Natural killer cell (primary cell): ENCODE measurements at regions of chr11 and their contacts with region 1.

Region 1: DNA sequence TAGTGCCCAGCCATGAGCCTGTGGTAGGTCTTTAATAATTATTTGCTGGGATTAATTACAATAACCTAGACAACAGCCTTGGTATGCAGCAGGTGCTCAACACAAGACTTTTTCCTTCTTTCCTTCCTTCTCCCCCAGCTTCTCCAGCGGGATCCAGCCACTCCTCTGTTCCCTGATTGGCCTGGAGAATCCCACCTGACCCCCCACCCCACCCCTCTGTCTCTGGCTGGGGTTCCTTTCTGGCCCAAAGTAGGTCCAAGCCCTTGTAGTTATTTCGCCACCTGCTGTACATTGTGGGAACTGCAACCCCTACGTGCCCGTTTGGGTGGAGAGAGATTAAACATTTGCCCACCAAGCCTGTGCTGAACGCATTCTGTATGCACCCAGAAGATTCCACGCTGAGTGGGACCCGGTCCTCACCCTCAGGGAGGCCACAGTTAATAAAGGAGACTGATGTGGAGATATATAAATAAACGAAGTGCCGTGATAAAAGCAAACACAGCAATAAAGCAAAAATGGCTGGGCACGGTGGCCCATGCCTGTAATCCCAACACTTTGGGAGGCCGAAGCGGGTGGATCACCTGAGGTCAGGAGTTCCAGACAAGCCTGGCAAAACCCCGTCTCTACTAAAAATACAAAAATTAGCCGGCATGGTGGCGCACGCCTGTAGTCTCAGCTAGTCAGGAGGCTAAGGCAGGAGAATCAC is 32.1 kb upstream of the DGKZ start:
- DNase-seq: peak; percentile 63 to 86
- ATAC-seq: peak; percentile 86 to 96 (median 95)
- H3K4me3 ChIP-seq: no peak overlapping the region
- H3K4me3 Mint-ChIP-seq: no peak overlapping the region
- H3K27ac ChIP-seq: no peak overlapping the region
- H3K27ac Mint-ChIP-seq: no peak overlapping the region
- H3K4me1 ChIP-seq: peaks cover 15% of the 10 kb centered on the region
- H3K4me1 Mint-ChIP-seq: peaks cover 15 to 18% of the 10 kb centered on the region in 2 donors
- H3K27me3 ChIP-seq: no peaks in the 10 kb centered on the region
- H3K27me3 Mint-ChIP-seq: peaks cover 0 to 6% of the 10 kb centered on the region in 2 donors
- CTCF ChIP-seq: peak; percentile 96

Region 2: GRCh38 chr11:46127150-46127638 is 188.0 kb before region 1 on chr11:
- intact Hi-C with region 1: loop called (anchors 5 kb)
- DNase-seq: peak; percentile 45 to 83
- ATAC-seq: peak; percentile 99 to 100 (median 99)
- H3K4me3 ChIP-seq: no peak overlapping the region
- H3K4me3 Mint-ChIP-seq: peak overlapping the region; percentile 21
- H3K27ac ChIP-seq: peak overlapping the region; percentile 56
- H3K27ac Mint-ChIP-seq: peak overlapping the region; percentile 87 to 88
- H3K4me1 ChIP-seq: peaks cover 9% of the 10 kb centered on the region
- H3K4me1 Mint-ChIP-seq: peaks cover 13 to 16% of the 10 kb centered on the region in 2 donors
- H3K27me3 ChIP-seq: no peaks in the 10 kb centered on the region
- H3K27me3 Mint-ChIP-seq: no peaks in the 10 kb centered on the region
- CTCF ChIP-seq: peak; percentile 58

Region 3: GRCh38 chr11:46259971-46260560 is 55.1 kb before region 1 on chr11:
- intact Hi-C with region 1: no loop called
- DNase-seq: no peak
- ATAC-seq: no peak
- H3K4me3 ChIP-seq: no peak overlapping the region
- H3K4me3 Mint-ChIP-seq: no peak overlapping the region
- H3K27ac ChIP-seq: no peak overlapping the region
- H3K27ac Mint-ChIP-seq: no peak overlapping the region
- H3K4me1 ChIP-seq: no peaks in the 10 kb centered on the region
- H3K4me1 Mint-ChIP-seq: no peaks in the 10 kb centered on the region
- H3K27me3 ChIP-seq: no peaks in the 10 kb centered on the region
- H3K27me3 Mint-ChIP-seq: no peaks in the 10 kb centered on the region
- CTCF ChIP-seq: no peak